B cell (primary cell): ENCODE measurements at regions of chr6 and their contacts with region 1.

Region 1: GRCh38 chr6:148746363-148747144 is at the start of gene UST:
- DNase-seq: peak; percentile 90
- ATAC-seq: peak; percentile 40
- H3K4me3 ChIP-seq: peak within 1 kb of the TSS; percentile 65 to 92 (median 84)
- H3K4me3 Mint-ChIP-seq: peak within 1 kb of the TSS; percentile 98
- H3K27ac ChIP-seq: peak within 1 kb of the TSS; percentile 77 to 88
- H3K27ac Mint-ChIP-seq: peak within 1 kb of the TSS; percentile 95
- H3K4me1 ChIP-seq: peaks cover 18 to 30% of the 10 kb centered on the region in 2 donors
- H3K4me1 Mint-ChIP-seq: peaks cover 40% of the 10 kb centered on the region
- H3K27me3 ChIP-seq: no peaks in the 10 kb centered on the region
- H3K27me3 Mint-ChIP-seq: no peaks in the 10 kb centered on the region
- CTCF ChIP-seq: peak; percentile 78
- total RNA-seq, gene UST: 16.9 TPM in 2 replicates

Region 2: GRCh38 chr6:147279427-147279826 is 1467.1 kb before region 1 on chr6:
- CTCF ChIA-PET with region 1: no interaction called
- POLR2A ChIA-PET with region 1: no interaction called
- intact Hi-C with region 1: no loop called
- DNase-seq: no peak
- ATAC-seq: no peak
- H3K4me3 ChIP-seq: no peak overlapping the region
- H3K4me3 Mint-ChIP-seq: no peak overlapping the region
- H3K27ac ChIP-seq: no peak overlapping the region
- H3K27ac Mint-ChIP-seq: no peak overlapping the region
- H3K4me1 ChIP-seq: no peaks in the 10 kb centered on the region
- H3K4me1 Mint-ChIP-seq: peaks cover 1% of the 10 kb centered on the region
- H3K27me3 ChIP-seq: no peaks in the 10 kb centered on the region
- H3K27me3 Mint-ChIP-seq: no peaks in the 10 kb centered on the region
- CTCF ChIP-seq: no peak

Region 3: GRCh38 chr6:148559848-148560433 is 186.6 kb before region 1 on chr6:
- CTCF ChIA-PET with region 1: interaction called, 3 read pairs
- POLR2A ChIA-PET with region 1: no interaction called
- intact Hi-C with region 1: loop called (anchors 5 kb)
- DNase-seq: peak; percentile 82
- ATAC-seq: peak; percentile 88
- H3K4me3 ChIP-seq: peak overlapping the region in 4 of 5 experiments; percentile 26 to 64 (median 52)
- H3K4me3 Mint-ChIP-seq: peak overlapping the region; percentile 60
- H3K27ac ChIP-seq: no peak overlapping the region
- H3K27ac Mint-ChIP-seq: no peak overlapping the region
- H3K4me1 ChIP-seq: peaks cover 14 to 32% of the 10 kb centered on the region in 2 donors
- H3K4me1 Mint-ChIP-seq: peaks cover 23% of the 10 kb centered on the region
- H3K27me3 ChIP-seq: peaks cover 0 to 2% (median 0%) of the 10 kb centered on the region in 4 experiments
- H3K27me3 Mint-ChIP-seq: no peaks in the 10 kb centered on the region
- CTCF ChIP-seq: peak; percentile 98

Region 4: GRCh38 chr6:148629181-148629580 is 117.4 kb before region 1 on chr6:
- CTCF ChIA-PET with region 1: no interaction called
- POLR2A ChIA-PET with region 1: no interaction called
- intact Hi-C with region 1: no loop called
- DNase-seq: no peak
- ATAC-seq: no peak
- H3K4me3 ChIP-seq: no peak overlapping the region
- H3K4me3 Mint-ChIP-seq: no peak overlapping the region
- H3K27ac ChIP-seq: no peak overlapping the region
- H3K27ac Mint-ChIP-seq: no peak overlapping the region
- H3K4me1 ChIP-seq: peaks cover 14% of the 10 kb centered on the region in 2 donors
- H3K4me1 Mint-ChIP-seq: peaks cover 13% of the 10 kb centered on the region
- H3K27me3 ChIP-seq: no peaks in the 10 kb centered on the region
- H3K27me3 Mint-ChIP-seq: no peaks in the 10 kb centered on the region
- CTCF ChIP-seq: no peak

Region 5: DNA sequence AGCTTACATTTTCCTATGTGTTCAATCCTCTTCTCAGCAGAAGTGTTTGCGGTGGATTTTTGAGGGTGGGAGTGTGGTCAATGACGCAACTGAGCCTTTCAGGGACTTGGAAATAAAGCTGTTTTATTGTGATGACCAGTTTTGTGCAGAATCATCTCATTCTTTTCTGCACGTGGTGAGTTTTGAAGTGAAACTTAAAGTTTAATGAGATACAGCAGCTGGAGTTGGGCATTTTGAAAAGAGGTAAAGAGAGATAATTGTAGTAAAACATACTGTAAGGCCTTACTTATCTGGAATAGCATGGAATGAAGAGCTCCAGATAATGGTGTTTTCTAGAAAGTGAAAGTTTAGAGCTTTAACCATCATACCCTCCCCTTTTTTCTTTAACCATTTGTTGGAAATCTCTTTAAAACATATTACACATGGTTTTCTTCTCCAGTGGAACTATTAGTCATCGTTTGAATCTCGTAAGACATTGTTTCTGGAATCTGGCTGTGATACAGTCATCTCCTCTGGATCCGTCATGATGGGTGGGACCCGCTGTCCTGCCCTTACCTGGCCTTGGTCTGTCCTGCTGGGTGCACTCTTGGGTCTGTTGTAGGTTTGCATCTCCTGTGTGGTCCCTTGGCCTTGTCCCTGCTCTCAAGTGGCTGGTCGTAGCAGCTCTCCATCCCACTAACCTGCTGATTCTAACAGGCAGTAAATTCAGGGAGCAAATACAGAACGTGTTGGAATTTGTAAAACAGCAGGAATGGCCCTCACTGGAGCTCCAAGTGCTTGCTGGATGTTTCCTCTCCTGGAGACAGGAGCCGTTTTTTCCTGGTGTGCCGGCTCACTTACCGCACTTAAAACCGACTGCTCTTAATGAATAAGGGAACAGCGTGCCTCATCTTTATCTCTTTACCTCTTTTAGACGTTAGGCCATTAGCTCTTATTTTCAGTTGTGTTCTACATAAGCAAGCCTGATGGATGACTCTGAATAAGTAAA is 30.1 kb after region 1 on chr6:
- CTCF ChIA-PET with region 1: interaction called, 14 read pairs
- POLR2A ChIA-PET with region 1: interaction called, 3 read pairs
- intact Hi-C with region 1: loop called (anchors 2 kb)
- DNase-seq: no peak
- ATAC-seq: no peak
- H3K4me3 ChIP-seq: no peak overlapping the region
- H3K4me3 Mint-ChIP-seq: peak overlapping the region; percentile 2
- H3K27ac ChIP-seq: no peak overlapping the region
- H3K27ac Mint-ChIP-seq: peak overlapping the region; percentile 32
- H3K4me1 ChIP-seq: peaks cover 35% of the 10 kb centered on the region in 2 donors
- H3K4me1 Mint-ChIP-seq: peaks cover 52% of the 10 kb centered on the region
- H3K27me3 ChIP-seq: no peaks in the 10 kb centered on the region
- H3K27me3 Mint-ChIP-seq: no peaks in the 10 kb centered on the region
- CTCF ChIP-seq: no peak

Region 6: DNA sequence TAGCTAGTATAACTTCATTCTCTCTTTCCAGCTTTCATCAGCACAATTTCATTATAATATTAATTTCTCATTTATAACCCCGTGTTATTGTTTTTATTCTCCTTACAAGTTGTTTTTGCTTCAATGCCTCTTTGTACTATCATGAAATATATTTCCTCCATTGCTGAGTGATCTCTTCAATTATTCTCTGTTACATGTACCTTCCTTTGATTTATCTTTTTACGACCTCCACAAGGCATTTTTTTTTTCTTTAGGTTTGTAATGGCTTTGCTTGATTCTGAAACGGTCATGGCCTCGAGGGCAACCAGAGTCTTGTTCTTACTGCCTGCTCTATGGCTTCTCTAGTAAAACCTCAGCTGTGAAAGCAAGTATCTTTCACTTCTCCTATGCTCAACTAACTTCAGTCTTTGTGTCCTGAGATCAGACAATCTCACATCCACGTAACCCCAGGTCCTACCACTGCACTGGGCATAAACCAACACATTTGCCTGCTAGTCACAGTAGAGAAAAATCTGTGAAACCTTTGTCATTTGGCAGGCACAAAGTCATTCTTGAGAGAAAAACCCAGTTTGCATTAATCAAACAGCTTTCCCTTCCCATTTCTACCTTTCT is 120.2 kb after region 1 on chr6:
- CTCF ChIA-PET with region 1: interaction called, 4 read pairs
- POLR2A ChIA-PET with region 1: no interaction called
- intact Hi-C with region 1: loop called (anchors 5 kb)
- DNase-seq: peak; percentile 74
- ATAC-seq: peak; percentile 91
- H3K4me3 ChIP-seq: peak overlapping the region in 1 of 5 experiments; percentile 8
- H3K4me3 Mint-ChIP-seq: peak overlapping the region; percentile 80
- H3K27ac ChIP-seq: peak overlapping the region; percentile 48 to 57
- H3K27ac Mint-ChIP-seq: peak overlapping the region; percentile 89
- H3K4me1 ChIP-seq: peaks cover 45 to 55% of the 10 kb centered on the region in 2 donors
- H3K4me1 Mint-ChIP-seq: peaks cover 81% of the 10 kb centered on the region
- H3K27me3 ChIP-seq: no peaks in the 10 kb centered on the region
- H3K27me3 Mint-ChIP-seq: no peaks in the 10 kb centered on the region
- CTCF ChIP-seq: no peak

Region 7: GRCh38 chr6:149028767-149029405 is 282.3 kb after region 1 on chr6:
- CTCF ChIA-PET with region 1: interaction called, 3 read pairs
- POLR2A ChIA-PET with region 1: no interaction called
- intact Hi-C with region 1: loop called (anchors 2 kb)
- DNase-seq: peak; percentile 88
- ATAC-seq: peak; percentile 53
- H3K4me3 ChIP-seq: no peak overlapping the region
- H3K4me3 Mint-ChIP-seq: no peak overlapping the region
- H3K27ac ChIP-seq: no peak overlapping the region
- H3K27ac Mint-ChIP-seq: no peak overlapping the region
- H3K4me1 ChIP-seq: peaks cover 3 to 19% of the 10 kb centered on the region in 2 donors
- H3K4me1 Mint-ChIP-seq: peaks cover 28% of the 10 kb centered on the region
- H3K27me3 ChIP-seq: no peaks in the 10 kb centered on the region
- H3K27me3 Mint-ChIP-seq: no peaks in the 10 kb centered on the region
- CTCF ChIP-seq: peak; percentile 92